Activated B cell treated with CpG ODN at 0.5 μM for 24 hours (primary cell): ENCODE measurements at regions of chr10 and their contacts with region 1.

Region 1: GRCh38 chr10:30433730-30434272 is at the start of gene MAP3K8:
- DNase-seq: peak; percentile 90
- ATAC-seq: peak; percentile 71
- H3K4me3 Mint-ChIP-seq: peak within 1 kb of the TSS; percentile 95
- H3K27ac Mint-ChIP-seq: peak within 1 kb of the TSS; percentile 94
- H3K4me1 Mint-ChIP-seq: peaks cover 71% of the 10 kb centered on the region
- H3K27me3 Mint-ChIP-seq: no peaks in the 10 kb centered on the region
- CTCF ChIP-seq: no peak
- total RNA-seq, gene MAP3K8: 141 and 160 TPM in 2 replicates

Region 2: DNA sequence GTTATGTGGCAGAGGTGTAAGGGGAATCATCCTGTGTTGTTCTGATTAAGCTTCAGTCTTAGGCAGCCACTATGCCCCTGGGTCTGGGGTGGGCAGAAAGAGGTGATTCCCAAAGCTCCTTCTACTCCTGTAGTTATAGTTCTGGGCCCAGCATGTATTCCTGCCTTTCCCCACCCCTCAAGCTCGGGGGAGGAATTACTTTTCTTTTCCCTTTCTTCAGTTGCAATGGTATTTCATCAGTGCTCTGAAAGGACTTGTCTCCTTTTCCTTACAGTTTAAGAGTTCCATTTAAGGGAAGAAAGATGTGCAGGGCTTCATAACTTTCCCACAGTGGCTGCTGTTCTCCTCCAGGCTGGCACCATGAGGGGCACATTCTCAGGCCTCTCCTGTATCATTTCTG is 178.9 kb before region 1 on chr10:
- CTCF ChIA-PET with region 1: no interaction called
- POLR2A ChIA-PET with region 1: no interaction called
- intact Hi-C with region 1: no loop called
- DNase-seq: no peak
- ATAC-seq: no peak
- H3K4me3 Mint-ChIP-seq: no peak overlapping the region
- H3K27ac Mint-ChIP-seq: no peak overlapping the region
- H3K4me1 Mint-ChIP-seq: no peaks in the 10 kb centered on the region
- H3K27me3 Mint-ChIP-seq: peaks cover 3% of the 10 kb centered on the region
- CTCF ChIP-seq: no peak

Region 3: DNA sequence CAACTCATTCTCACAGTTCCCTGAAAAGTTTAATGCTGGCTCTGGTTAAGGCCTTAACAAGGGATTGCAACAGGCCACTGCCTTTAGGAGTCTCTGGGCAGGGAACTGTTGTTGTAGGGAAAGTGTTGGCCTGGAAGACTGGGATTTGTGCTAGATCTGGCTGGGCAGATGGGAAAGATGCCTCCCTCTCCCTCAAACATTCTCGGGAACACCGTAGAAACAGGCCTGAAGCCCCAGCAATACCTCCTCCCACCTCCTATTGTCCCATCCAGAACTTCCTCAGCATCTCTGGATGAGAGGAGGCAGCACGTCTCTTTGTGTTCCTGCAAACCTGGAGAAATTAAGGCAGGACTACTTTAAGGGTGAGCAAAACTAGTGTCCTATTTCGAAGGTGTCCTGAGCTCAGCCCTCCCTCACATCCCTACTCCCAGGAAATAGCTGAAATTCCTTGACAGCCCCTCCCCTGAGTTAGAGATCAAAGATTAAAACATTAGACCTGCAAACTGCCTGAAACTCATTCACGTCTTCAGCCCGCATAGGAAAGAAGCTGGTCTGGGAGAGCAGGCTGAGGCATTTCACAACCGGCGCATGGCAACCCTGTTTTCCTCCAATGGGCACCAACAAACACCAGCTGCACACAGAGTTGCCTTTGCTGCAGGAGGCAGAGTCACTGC is 10.7 kb before region 1 on chr10:
- CTCF ChIA-PET with region 1: interaction called, 22 read pairs
- POLR2A ChIA-PET with region 1: interaction called, 427 read pairs
- intact Hi-C with region 1: loop called (anchors 1 kb)
- DNase-seq: no peak
- ATAC-seq: peak; percentile 11
- H3K4me3 Mint-ChIP-seq: peak overlapping the region; percentile 61
- H3K27ac Mint-ChIP-seq: peak overlapping the region; percentile 84
- H3K4me1 Mint-ChIP-seq: peaks cover 90% of the 10 kb centered on the region
- H3K27me3 Mint-ChIP-seq: no peaks in the 10 kb centered on the region
- CTCF ChIP-seq: no peak

Region 4: GRCh38 chr10:30467651-30468338 is 34.0 kb after region 1 on chr10:
- CTCF ChIA-PET with region 1: interaction called, 3 read pairs
- POLR2A ChIA-PET with region 1: interaction called, 10 read pairs
- intact Hi-C with region 1: no loop called
- DNase-seq: no peak
- ATAC-seq: peak; percentile 84
- H3K4me3 Mint-ChIP-seq: peak overlapping the region; percentile 56
- H3K27ac Mint-ChIP-seq: peak overlapping the region; percentile 74
- H3K4me1 Mint-ChIP-seq: peaks cover 35% of the 10 kb centered on the region
- H3K27me3 Mint-ChIP-seq: no peaks in the 10 kb centered on the region
- CTCF ChIP-seq: no peak

Region 5: DNA sequence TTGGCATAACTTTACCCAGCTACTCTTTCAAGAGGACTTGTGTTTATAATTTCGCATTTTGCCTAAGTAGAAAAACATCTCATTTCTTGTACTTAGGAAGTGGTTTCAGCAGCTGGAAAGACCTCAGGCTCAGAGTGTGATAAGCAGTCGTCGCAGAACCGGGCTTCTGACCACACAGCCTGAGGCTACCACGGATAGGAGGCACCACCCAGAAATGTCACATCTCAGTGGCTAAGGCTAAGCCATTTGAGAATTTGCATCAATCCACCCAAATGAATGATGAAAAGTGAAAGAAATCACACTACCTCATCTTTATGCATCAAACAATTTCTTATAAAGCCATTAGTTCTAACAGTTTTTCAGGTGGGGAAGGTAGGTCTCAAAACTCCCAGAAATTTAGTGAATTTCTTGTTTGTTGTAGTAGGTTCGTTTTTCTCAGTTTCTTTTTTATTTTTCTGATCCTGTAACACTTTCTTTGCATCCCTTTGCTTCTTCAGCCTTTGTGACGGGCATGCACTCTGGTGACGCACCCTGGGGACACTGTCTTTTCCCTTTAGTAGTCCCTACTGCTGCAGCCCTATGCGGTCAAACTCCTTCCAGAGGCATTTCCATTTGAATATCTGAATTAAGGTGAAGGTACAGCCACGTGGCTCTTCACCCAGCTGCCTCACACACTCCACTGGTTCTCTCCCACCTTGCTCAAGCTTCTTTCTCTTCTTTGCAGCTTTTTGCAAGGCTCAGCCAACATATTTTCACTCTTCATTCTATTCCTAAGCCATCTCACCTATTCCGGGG is 68.7 kb after region 1 on chr10:
- CTCF ChIA-PET with region 1: interaction called, 3 read pairs
- POLR2A ChIA-PET with region 1: interaction called, 23 read pairs
- intact Hi-C with region 1: loop called (anchors 1 kb)
- DNase-seq: no peak
- ATAC-seq: peak; percentile 85
- H3K4me3 Mint-ChIP-seq: peak overlapping the region; percentile 79
- H3K27ac Mint-ChIP-seq: peak overlapping the region; percentile 83
- H3K4me1 Mint-ChIP-seq: peaks cover 89% of the 10 kb centered on the region
- H3K27me3 Mint-ChIP-seq: no peaks in the 10 kb centered on the region
- CTCF ChIP-seq: no peak

Region 6: GRCh38 chr10:30534465-30535144 is 100.8 kb after region 1 on chr10:
- CTCF ChIA-PET with region 1: interaction called, 14 read pairs
- POLR2A ChIA-PET with region 1: interaction called, 140 read pairs
- intact Hi-C with region 1: loop called (anchors 1 kb)
- DNase-seq: peak; percentile 40
- ATAC-seq: peak; percentile 45
- H3K4me3 Mint-ChIP-seq: no peak overlapping the region
- H3K27ac Mint-ChIP-seq: peak overlapping the region; percentile 69
- H3K4me1 Mint-ChIP-seq: peaks cover 42% of the 10 kb centered on the region
- H3K27me3 Mint-ChIP-seq: no peaks in the 10 kb centered on the region
- CTCF ChIP-seq: peak; percentile 57

Region 7: GRCh38 chr10:31928549-31929260 is 1494.9 kb after region 1 on chr10 and contains the start of gene ARHGAP12:
- CTCF ChIA-PET with region 1: no interaction called
- POLR2A ChIA-PET with region 1: no interaction called
- intact Hi-C with region 1: loop called (anchors 2 kb)
- DNase-seq: peak; percentile 97
- ATAC-seq: peak; percentile 74
- H3K4me3 Mint-ChIP-seq: peak within 1 kb of the TSS; percentile 91
- H3K27ac Mint-ChIP-seq: peak within 1 kb of the TSS; percentile 88
- H3K4me1 Mint-ChIP-seq: peaks cover 44% of the 10 kb centered on the region
- H3K27me3 Mint-ChIP-seq: no peaks in the 10 kb centered on the region
- CTCF ChIP-seq: no peak
- total RNA-seq, gene ARHGAP12: 23.2 and 27.3 TPM in 2 replicates